Aorta (tissue), 5 donors: ENCODE measurements at regions of chr15 and their contacts with region 1.

Region 1: GRCh38 chr15:95557226-95558046 is 773.1 kb upstream of the NR2F2 start:
- DNase-seq: peak in 1 of 2 donors; percentile 55
- ATAC-seq: peak; percentile 86
- H3K4me3 ChIP-seq: no peak overlapping the region
- H3K27ac ChIP-seq: peak overlapping the region; percentile 51 to 84
- H3K4me1 ChIP-seq: peaks cover 0 to 2% of the 10 kb centered on the region in 2 donors
- H3K27me3 ChIP-seq: no peaks in the 10 kb centered on the region

Region 2: GRCh38 chr15:95266451-95267061 is 290.9 kb before region 1 on chr15:
- intact Hi-C with region 1: loop called (anchors 5 kb)
- DNase-seq: peak in 1 of 2 donors; percentile 55
- ATAC-seq: peak; percentile 65
- H3K4me3 ChIP-seq: no peak overlapping the region
- H3K27ac ChIP-seq: peak overlapping the region; percentile 91 to 99
- H3K4me1 ChIP-seq: peaks cover 2 to 5% of the 10 kb centered on the region in 2 donors
- H3K27me3 ChIP-seq: no peaks in the 10 kb centered on the region

Region 3: GRCh38 chr15:95409626-95410310 is 147.7 kb before region 1 on chr15:
- intact Hi-C with region 1: loop called in 1 of 2 experiments (anchors 5 kb)
- DNase-seq: no peak
- ATAC-seq: no peak
- H3K4me3 ChIP-seq: no peak overlapping the region
- H3K27ac ChIP-seq: no peak overlapping the region
- H3K4me1 ChIP-seq: peaks cover 6 to 8% of the 10 kb centered on the region in 2 donors
- H3K27me3 ChIP-seq: no peaks in the 10 kb centered on the region

Region 4: GRCh38 chr15:95464509-95464908 is 92.9 kb before region 1 on chr15:
- intact Hi-C with region 1: loop called in 1 of 2 experiments (anchors 10 kb)
- DNase-seq: no peak
- ATAC-seq: peak; percentile 53
- H3K4me3 ChIP-seq: no peak overlapping the region
- H3K27ac ChIP-seq: peak overlapping the region in 1 of 2 donors; percentile 63
- H3K4me1 ChIP-seq: peaks cover 0 to 1% of the 10 kb centered on the region in 2 donors
- H3K27me3 ChIP-seq: no peaks in the 10 kb centered on the region

Region 5: GRCh38 chr15:95470997-95471689 is 86.3 kb before region 1 on chr15:
- intact Hi-C with region 1: loop called (anchors 10 kb)
- DNase-seq: peak in 1 of 2 donors; percentile 57
- ATAC-seq: peak; percentile 53
- H3K4me3 ChIP-seq: no peak overlapping the region
- H3K27ac ChIP-seq: peak overlapping the region; percentile 36 to 75
- H3K4me1 ChIP-seq: peaks cover 0 to 3% of the 10 kb centered on the region in 2 donors
- H3K27me3 ChIP-seq: no peaks in the 10 kb centered on the region

Region 6: GRCh38 chr15:95604634-95605036 is 47.2 kb after region 1 on chr15:
- intact Hi-C with region 1: loop called in 1 of 2 experiments (anchors 5 kb)
- DNase-seq: no peak
- ATAC-seq: peak; percentile 77
- H3K4me3 ChIP-seq: no peak overlapping the region
- H3K27ac ChIP-seq: no peak overlapping the region
- H3K4me1 ChIP-seq: peaks cover 4% of the 10 kb centered on the region in 2 donors
- H3K27me3 ChIP-seq: no peaks in the 10 kb centered on the region

Region 7: DNA sequence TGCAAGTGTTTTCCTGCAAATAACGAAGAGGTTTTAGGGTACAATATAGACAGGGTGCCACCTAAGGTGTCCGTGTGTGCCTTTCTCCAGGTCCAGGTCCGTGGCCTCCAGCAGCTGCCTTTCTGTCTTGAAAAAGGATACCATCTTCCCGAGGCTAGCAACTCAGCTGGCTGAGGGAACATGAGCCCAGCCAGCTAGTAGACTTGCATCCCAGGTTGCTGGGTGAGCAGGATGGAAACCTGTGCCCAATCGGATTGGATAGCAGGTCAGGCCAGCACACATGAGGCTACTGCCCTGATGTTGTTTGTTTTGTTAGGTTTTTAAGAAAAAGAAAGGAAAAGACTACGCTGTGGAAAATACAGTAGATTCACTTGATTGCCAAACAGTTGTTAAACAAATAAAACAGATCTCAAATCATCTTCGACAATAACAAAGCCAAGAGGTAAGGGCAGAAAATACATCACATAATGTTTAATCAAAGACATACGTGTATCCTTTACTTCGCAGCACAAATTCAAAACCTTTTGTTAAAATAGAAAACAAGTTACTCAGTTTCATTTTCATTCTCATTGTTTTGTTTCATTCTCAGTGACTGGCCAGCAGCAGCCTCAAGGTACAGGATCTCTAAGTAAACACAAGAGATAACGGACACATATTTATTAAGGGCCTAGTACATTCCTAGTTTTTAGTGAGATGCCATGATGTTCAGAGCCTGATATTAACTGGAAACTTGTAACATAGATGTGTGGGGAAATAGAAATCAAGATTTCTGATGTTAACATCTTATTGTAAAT is 111.9 kb after region 1 on chr15:
- intact Hi-C with region 1: no loop called
- DNase-seq: no peak
- ATAC-seq: no peak
- H3K4me3 ChIP-seq: no peak overlapping the region
- H3K27ac ChIP-seq: no peak overlapping the region
- H3K4me1 ChIP-seq: peaks cover 0 to 2% of the 10 kb centered on the region in 2 donors
- H3K27me3 ChIP-seq: no peaks in the 10 kb centered on the region